ENCODE measurements at regions of chr18 and their contacts with region 1.

Region 1: GRCh38 chr18:10560450-10561045 is 34.7 kb downstream of the NAPG start:
- DNase-seq: peak in 4 of 5 donors; percentile 57 to 71 (median 70)
- ATAC-seq: peak; percentile 66 to 74 (median 72)
- H3K4me3 ChIP-seq: peak overlapping the region in 8 of 12 donors; percentile 27 to 51 (median 33)
- H3K27ac ChIP-seq: peak overlapping the region in 3 of 12 donors; percentile 6 to 57 (median 19)
- H3K4me1 ChIP-seq: peaks cover 0 to 20% (median 7%) of the 10 kb centered on the region in 12 donors
- H3K27me3 ChIP-seq: no peaks in the 10 kb centered on the region
- CTCF ChIP-seq: peak; percentile 68 to 82 (median 76)
- POLR2A ChIP-seq: no peak

Region 2: GRCh38 chr18:9898792-9899549 is 661.6 kb before region 1 on chr18:
- intact Hi-C with region 1: no loop called
- DNase-seq: no peak
- ATAC-seq: no peak
- H3K4me3 ChIP-seq: no peak overlapping the region
- H3K27ac ChIP-seq: no peak overlapping the region
- H3K4me1 ChIP-seq: peaks cover 0 to 5% (median 0%) of the 10 kb centered on the region in 12 donors
- H3K27me3 ChIP-seq: no peaks in the 10 kb centered on the region
- CTCF ChIP-seq: no peak
- POLR2A ChIP-seq: no peak

Region 3: GRCh38 chr18:10660179-10660884 is 99.8 kb after region 1 on chr18:
- intact Hi-C with region 1: loop called in 1 of 10 experiments (anchors 5 kb)
- DNase-seq: peak in 1 of 5 donors; percentile 39
- ATAC-seq: peak in 3 of 4 donors; percentile 66 to 81 (median 74)
- H3K4me3 ChIP-seq: no peak overlapping the region
- H3K27ac ChIP-seq: peak overlapping the region in 1 of 12 donors; percentile 25
- H3K4me1 ChIP-seq: no peaks in the 10 kb centered on the region
- H3K27me3 ChIP-seq: peaks cover 0 to 4% (median 0%) of the 10 kb centered on the region in 9 donors
- CTCF ChIP-seq: no peak
- POLR2A ChIP-seq: no peak

Region 4: DNA sequence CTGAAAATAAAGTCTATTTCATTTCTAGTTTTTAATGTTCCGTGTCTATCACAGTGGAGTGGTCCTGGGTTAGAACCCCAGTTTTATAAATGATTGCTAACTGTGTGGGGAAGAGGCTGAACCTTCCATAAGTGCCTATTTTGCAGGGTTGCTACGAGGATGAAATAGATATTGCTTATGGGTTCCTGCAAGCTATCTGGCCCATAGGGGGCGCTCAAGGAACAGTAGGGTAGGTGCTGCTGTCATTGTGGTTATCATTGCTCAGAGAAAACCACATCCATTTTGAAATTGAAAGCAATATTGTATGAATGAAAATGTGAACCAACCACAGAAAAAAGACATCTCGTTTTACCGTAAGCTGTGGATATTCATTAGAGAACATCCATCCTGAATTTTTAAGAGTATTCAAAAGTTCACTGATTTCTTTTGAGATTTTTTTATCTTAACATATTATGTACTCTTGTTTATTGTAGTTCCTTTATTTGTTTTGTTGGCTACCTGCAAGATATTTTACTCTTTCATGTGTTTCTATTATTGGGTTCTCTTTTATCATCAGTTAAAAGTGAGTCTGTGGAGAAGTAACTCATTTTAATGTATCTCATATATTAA is 226.8 kb after region 1 on chr18:
- intact Hi-C with region 1: loop called in 1 of 10 experiments (anchors 10 kb)
- DNase-seq: peak; percentile 52 to 83 (median 66)
- ATAC-seq: peak in 1 of 4 donors; percentile 63
- H3K4me3 ChIP-seq: no peak overlapping the region
- H3K27ac ChIP-seq: no peak overlapping the region
- H3K4me1 ChIP-seq: peaks cover 0 to 6% (median 0%) of the 10 kb centered on the region in 12 donors
- H3K27me3 ChIP-seq: no peaks in the 10 kb centered on the region
- CTCF ChIP-seq: peak; percentile 46 to 77 (median 63)
- POLR2A ChIP-seq: no peak

Region 5: GRCh38 chr18:11040823-11041656 is 480.5 kb after region 1 on chr18:
- intact Hi-C with region 1: loop called in 4 of 10 experiments (anchors 5 to 10 kb)
- DNase-seq: peak in 2 of 5 donors; percentile 36 to 37
- ATAC-seq: peak in 2 of 4 donors; percentile 58 to 63
- H3K4me3 ChIP-seq: no peak overlapping the region
- H3K27ac ChIP-seq: no peak overlapping the region
- H3K4me1 ChIP-seq: no peaks in the 10 kb centered on the region
- H3K27me3 ChIP-seq: peaks cover 0 to 3% (median 0%) of the 10 kb centered on the region in 9 donors
- CTCF ChIP-seq: peak; percentile 55 to 87 (median 72)
- POLR2A ChIP-seq: no peak

Region 6: DNA sequence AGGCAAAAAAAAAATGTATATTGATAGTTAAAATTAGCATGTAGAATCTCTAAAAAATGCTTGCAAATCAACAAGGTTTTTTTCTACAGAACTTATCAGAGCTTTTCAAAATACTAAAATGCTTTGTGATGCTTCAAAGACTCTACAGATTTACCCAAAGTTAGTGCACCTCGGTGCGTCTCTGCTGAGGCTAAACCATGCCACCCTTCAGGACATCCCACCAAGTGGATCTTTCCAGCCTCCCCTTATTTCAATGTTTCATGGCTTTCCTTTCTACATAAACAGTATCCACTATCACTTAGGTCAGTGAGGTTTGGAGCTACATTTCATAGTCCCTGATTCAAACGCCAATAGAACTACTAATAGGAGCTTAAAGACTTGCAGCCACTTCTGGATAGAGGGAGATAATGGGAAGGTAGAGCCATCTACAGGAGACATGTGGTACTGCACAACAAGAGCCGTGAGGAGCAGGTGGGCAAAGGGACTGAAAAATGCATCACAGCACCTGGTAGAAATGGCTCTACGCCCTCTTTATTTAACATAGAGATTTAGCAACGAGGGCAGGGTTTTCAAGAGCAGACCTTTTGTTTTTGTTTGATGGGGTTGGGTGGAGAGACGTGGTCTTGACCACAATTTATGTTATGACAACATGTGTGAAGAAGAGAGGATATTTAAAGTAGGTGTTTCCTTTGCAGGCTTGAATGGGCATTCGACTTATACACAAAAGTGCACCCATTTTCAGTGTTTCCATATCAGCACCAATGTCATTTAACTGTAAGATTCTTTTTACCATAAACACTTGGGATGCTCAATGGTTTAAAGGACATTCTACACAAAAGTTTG is 992.8 kb after region 1 on chr18:
- intact Hi-C with region 1: loop called in 6 of 10 experiments (anchors 5 to 10 kb)
- DNase-seq: no peak
- ATAC-seq: peak; percentile 55 to 75 (median 64)
- H3K4me3 ChIP-seq: no peak overlapping the region
- H3K27ac ChIP-seq: no peak overlapping the region
- H3K4me1 ChIP-seq: no peaks in the 10 kb centered on the region
- H3K27me3 ChIP-seq: peaks cover 0 to 11% (median 0%) of the 10 kb centered on the region in 9 donors
- CTCF ChIP-seq: peak; percentile 80 to 92 (median 86)
- POLR2A ChIP-seq: no peak